CD8-positive, alpha-beta memory T cell (primary cell): ENCODE measurements at regions of chr2 and their contacts with region 1.

Region 1: GRCh38 chr2:219498280-219499057 is at the start of gene GMPPA:
- DNase-seq: peak; percentile 84 to 95 (median 89)
- H3K4me3 ChIP-seq: peak within 1 kb of the TSS; percentile 77
- H3K4me3 Mint-ChIP-seq: peak within 1 kb of the TSS; percentile 85 to 99 (median 96)
- H3K27ac ChIP-seq: peak within 1 kb of the TSS; percentile 70
- H3K27ac Mint-ChIP-seq: peak within 1 kb of the TSS; percentile 5 to 95 (median 88)
- H3K4me1 ChIP-seq: peaks cover 26% of the 10 kb centered on the region
- H3K4me1 Mint-ChIP-seq: peaks cover 28 to 45% (median 32%) of the 10 kb centered on the region in 3 donors
- H3K27me3 ChIP-seq: peaks cover 30% of the 10 kb centered on the region
- H3K27me3 Mint-ChIP-seq: peaks cover 23 to 42% of the 10 kb centered on the region in 2 donors
- total RNA-seq, gene GMPPA: 36.9 to 37.1 TPM

Region 2: DNA sequence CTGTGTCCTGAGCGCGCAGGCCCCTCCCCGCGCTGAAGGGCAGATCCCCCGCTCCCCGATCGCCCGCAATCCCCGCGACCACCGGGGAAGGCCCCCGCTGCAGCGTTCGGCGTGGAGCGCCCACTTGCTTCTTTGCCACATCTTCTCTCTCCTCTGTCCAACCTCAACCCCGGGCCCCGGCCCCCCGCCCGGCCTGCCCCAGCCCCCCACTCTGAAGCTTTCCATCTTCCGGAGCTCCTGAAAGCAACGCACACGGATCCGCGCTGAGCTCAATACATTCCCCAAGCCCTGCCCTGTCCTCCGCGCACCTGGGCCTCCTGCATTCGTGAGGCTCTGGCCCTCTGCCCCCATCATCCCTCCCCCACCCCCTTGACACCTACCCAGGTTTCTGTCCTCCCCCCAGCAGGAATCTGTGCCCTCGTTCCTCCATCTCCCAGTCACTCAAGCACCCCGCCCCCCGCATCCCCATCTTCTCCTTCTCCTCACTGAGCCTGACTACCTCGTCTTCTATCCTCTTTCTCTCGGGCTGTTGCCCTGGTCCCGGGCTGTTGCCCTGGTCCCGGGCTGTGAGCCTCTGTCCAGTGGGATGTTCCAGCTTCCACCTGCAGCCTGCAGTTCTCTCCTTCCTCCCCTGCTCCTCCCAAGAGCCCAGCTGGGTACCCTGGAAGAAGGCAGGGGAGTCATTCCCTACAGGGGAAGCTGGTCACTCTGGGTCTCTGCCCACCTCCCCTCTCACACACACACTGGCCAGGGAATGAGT is 56.0 kb before region 1 on chr2:
- CTCF ChIA-PET with region 1: no interaction called
- POLR2A ChIA-PET with region 1: no interaction called
- DNase-seq: no peak
- H3K4me3 ChIP-seq: no peak overlapping the region
- H3K4me3 Mint-ChIP-seq: peak overlapping the region; percentile 75 to 82 (median 77)
- H3K27ac ChIP-seq: no peak overlapping the region
- H3K27ac Mint-ChIP-seq: peak overlapping the region in 3 of 8 donors; percentile 35 to 77 (median 66)
- H3K4me1 ChIP-seq: no peaks in the 10 kb centered on the region
- H3K4me1 Mint-ChIP-seq: peaks cover 12 to 18% (median 15%) of the 10 kb centered on the region in 3 donors
- H3K27me3 ChIP-seq: peaks cover 4% of the 10 kb centered on the region
- H3K27me3 Mint-ChIP-seq: peaks cover 22 to 28% of the 10 kb centered on the region in 2 donors

Region 3: DNA sequence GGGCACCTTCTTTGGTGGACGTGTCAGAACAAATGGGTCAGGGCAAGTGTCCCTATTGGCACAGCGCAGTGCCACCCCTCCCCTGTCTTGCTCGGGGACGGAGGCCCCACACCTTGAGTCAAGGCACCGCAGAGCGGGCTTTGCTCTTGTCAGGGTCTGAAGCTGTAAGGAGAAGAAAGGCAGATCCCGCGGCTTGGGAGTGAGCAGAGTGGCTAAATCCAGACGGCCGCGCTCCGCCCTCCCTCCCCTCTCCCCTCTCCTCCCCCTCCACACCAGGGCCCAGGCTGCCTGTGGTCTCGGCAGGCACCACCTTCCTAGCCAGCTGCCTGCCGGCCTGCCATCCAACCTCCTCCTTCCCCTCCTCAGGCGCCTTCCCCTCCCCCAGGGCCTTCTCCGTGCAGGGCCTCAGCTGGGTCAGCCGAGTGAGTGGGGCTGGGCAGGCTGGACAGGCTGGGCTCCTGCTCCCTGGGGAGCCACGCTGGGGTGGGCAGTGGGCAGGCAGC is 38.0 kb before region 1 on chr2:
- CTCF ChIA-PET with region 1: no interaction called
- POLR2A ChIA-PET with region 1: no interaction called
- DNase-seq: no peak
- H3K4me3 ChIP-seq: no peak overlapping the region
- H3K4me3 Mint-ChIP-seq: no peak overlapping the region
- H3K27ac ChIP-seq: no peak overlapping the region
- H3K27ac Mint-ChIP-seq: no peak overlapping the region
- H3K4me1 ChIP-seq: no peaks in the 10 kb centered on the region
- H3K4me1 Mint-ChIP-seq: peaks cover 0 to 2% (median 0%) of the 10 kb centered on the region in 3 donors
- H3K27me3 ChIP-seq: no peaks in the 10 kb centered on the region
- H3K27me3 Mint-ChIP-seq: peaks cover 0 to 3% of the 10 kb centered on the region in 2 donors

Region 4: DNA sequence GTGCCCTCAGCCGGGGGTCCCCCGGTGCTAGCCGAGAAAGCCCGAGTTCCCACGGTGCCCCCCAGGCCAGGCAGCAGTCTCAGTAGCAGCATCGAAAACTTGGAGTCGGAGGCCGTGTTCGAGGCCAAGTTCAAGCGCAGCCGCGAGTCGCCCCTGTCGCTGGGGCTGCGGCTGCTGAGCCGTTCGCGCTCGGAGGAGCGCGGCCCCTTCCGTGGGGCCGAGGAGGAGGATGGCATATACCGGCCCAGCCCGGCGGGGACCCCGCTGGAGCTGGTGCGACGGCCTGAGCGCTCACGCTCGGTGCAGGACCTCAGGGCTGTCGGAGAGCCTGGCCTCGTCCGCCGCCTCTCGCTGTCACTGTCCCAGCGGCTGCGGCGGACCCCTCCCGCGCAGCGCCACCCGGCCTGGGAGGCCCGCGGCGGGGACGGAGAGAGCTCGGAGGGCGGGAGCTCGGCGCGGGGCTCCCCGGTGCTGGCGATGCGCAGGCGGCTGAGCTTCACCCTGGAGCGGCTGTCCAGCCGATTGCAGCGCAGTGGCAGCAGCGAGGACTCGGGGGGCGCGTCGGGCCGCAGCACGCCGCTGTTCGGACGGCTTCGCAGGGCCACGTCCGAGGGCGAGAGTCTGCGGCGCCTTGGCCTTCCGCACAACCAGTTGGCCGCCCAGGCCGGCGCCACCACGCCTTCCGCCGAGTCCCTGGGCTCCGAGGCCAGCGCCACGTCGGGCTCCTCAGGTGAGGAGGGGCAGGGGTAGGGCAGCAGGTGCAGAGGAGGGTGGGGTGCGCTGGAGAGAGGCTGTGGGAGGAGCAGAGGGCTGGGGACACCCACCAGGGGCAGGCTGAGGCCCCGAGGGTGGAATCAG is 13.9 kb before region 1 on chr2:
- CTCF ChIA-PET with region 1: interaction called, 26 read pairs
- POLR2A ChIA-PET with region 1: no interaction called
- DNase-seq: peak in 1 of 5 donors; percentile 11
- H3K4me3 ChIP-seq: no peak overlapping the region
- H3K4me3 Mint-ChIP-seq: peak overlapping the region; percentile 24 to 86 (median 67)
- H3K27ac ChIP-seq: no peak overlapping the region
- H3K27ac Mint-ChIP-seq: no peak overlapping the region
- H3K4me1 ChIP-seq: no peaks in the 10 kb centered on the region
- H3K4me1 Mint-ChIP-seq: peaks cover 0 to 16% (median 2%) of the 10 kb centered on the region in 3 donors
- H3K27me3 ChIP-seq: peaks cover 22% of the 10 kb centered on the region
- H3K27me3 Mint-ChIP-seq: peaks cover 29 to 63% of the 10 kb centered on the region in 2 donors

Region 5: GRCh38 chr2:219509780-219510511 is 11.5 kb after region 1 on chr2:
- CTCF ChIA-PET with region 1: interaction called, 36 read pairs
- POLR2A ChIA-PET with region 1: interaction called, 5 read pairs
- DNase-seq: peak in 4 of 5 donors; percentile 7 to 42 (median 29)
- H3K4me3 ChIP-seq: no peak overlapping the region
- H3K4me3 Mint-ChIP-seq: peak overlapping the region in 6 of 7 donors; percentile 19 to 71 (median 58)
- H3K27ac ChIP-seq: peak overlapping the region; percentile 43
- H3K27ac Mint-ChIP-seq: peak overlapping the region in 1 of 8 donors; percentile 21
- H3K4me1 ChIP-seq: peaks cover 15% of the 10 kb centered on the region
- H3K4me1 Mint-ChIP-seq: peaks cover 17 to 37% (median 20%) of the 10 kb centered on the region in 3 donors
- H3K27me3 ChIP-seq: peaks cover 12% of the 10 kb centered on the region
- H3K27me3 Mint-ChIP-seq: peaks cover 42 to 56% of the 10 kb centered on the region in 2 donors

Region 6: GRCh38 chr2:219713108-219713507 is 214.6 kb after region 1 on chr2:
- CTCF ChIA-PET with region 1: no interaction called
- POLR2A ChIA-PET with region 1: no interaction called
- DNase-seq: no peak
- H3K4me3 ChIP-seq: no peak overlapping the region
- H3K4me3 Mint-ChIP-seq: no peak overlapping the region
- H3K27ac ChIP-seq: no peak overlapping the region
- H3K27ac Mint-ChIP-seq: no peak overlapping the region
- H3K4me1 ChIP-seq: no peaks in the 10 kb centered on the region
- H3K4me1 Mint-ChIP-seq: no peaks in the 10 kb centered on the region
- H3K27me3 ChIP-seq: peaks cover 5% of the 10 kb centered on the region
- H3K27me3 Mint-ChIP-seq: peaks cover 11 to 36% of the 10 kb centered on the region in 2 donors